B cell (primary cell): ENCODE measurements at regions of chr16 and their contacts with region 1.

Region 1: DNA sequence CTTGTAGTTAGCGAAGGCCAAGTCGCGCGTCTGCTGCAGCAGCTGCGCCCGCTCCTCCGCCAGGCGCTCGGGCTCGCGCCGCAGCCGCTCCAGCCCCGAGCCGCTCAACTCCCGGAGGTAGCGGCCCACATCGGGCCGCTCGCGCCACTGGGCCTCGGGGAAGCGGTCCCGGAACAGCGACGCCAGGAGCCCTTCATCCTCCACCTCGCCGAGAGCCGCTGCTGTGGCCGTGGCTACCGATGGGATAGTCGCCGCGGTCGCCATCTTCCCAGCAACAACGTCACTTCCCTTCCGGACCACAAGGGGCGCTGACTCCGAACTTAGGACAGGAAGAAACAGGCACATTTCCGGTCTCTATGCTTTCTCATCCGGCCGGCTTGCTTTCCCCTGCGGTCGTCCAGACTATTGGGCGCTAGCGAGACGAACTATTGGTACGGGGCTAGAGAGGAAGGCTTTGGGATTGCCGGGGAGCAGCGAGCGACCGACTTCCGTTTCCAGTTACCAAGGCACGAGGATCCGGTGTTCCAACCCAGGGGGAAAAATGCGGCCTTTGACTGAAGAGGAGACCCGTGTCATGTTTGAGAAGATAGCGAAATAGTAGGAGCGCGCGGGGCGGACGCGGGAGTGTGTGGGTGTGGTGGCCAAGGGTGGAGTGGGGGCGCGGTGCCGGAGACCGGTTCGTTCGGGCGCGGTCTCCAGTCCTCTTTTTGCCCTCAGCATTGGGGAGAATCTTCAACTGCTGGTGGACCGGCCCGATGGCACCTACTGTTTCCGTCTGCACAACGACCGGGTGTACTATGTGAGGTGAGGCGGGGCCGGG is at the starts of genes COG8 and NIP7:
- DNase-seq: peak; percentile 96
- ATAC-seq: peak; percentile 94
- H3K4me3 ChIP-seq: peak within 1 kb of the TSS; percentile 26 to 99 (median 68)
- H3K4me3 Mint-ChIP-seq: peak within 1 kb of the TSS; percentile 98
- H3K27ac ChIP-seq: peak within 1 kb of the TSS; percentile 65 to 87
- H3K27ac Mint-ChIP-seq: peak within 1 kb of the TSS; percentile 98
- H3K4me1 ChIP-seq: peaks cover 17 to 27% of the 10 kb centered on the region in 2 donors
- H3K4me1 Mint-ChIP-seq: peaks cover 45% of the 10 kb centered on the region
- H3K27me3 ChIP-seq: no peaks in the 10 kb centered on the region
- H3K27me3 Mint-ChIP-seq: no peaks in the 10 kb centered on the region
- CTCF ChIP-seq: peak; percentile 84
- total RNA-seq, gene COG8: 61.6 and 62.0 TPM in 2 replicates
- total RNA-seq, gene NIP7: 20.2 and 29.3 TPM in 2 replicates

Region 2: DNA sequence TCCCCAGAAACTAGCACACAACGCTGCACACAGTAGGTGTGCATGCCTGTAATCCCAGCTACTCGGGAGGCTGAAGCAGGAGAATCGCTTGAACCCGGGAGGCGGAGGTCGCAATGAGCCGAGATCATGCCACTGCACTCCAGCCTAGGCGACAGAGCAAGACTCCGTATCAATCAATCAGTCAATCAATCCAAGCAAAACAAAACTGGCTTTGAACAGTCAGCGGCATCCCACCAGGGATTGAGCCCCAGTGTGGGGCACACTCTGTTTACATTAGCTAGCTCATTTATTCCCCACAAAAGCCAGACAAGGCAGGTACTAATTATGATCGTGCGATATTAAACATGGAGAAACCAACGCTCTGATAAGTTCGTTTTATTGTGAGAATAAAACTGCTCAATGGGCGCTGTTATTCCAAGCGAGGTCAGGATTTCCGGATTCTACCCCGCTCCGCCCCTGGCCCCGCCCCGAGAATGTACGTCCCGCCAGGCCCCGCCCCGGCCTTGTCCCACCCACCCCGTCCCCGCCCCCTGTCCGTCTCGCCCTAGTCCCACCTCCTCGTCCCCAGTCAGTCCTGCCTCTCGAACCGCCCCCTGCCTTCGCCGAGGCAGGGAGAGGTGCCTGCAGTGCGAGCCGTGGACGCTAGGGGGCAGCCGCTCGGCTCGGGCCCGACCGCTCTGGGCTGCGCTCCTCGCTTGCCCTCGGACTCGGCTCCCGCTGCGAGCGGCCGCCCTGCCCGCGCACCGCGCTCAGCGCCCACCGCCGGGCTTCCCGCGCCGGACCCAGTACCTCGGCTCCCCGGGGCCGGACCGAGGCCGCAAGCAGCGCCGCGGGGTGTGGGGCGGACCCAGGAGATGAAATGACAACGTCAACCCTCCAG is 28.6 kb before region 1 on chr16 and contains the start of gene VPS4A:
- CTCF ChIA-PET with region 1: interaction called, 4 read pairs
- POLR2A ChIA-PET with region 1: no interaction called
- intact Hi-C with region 1: loop called (anchors 1 kb)
- DNase-seq: peak; percentile 97
- ATAC-seq: peak; percentile 98
- H3K4me3 ChIP-seq: peak within 1 kb of the TSS; percentile 62 to 89 (median 67)
- H3K4me3 Mint-ChIP-seq: peak within 1 kb of the TSS; percentile 99
- H3K27ac ChIP-seq: peak within 1 kb of the TSS; percentile 75 to 84
- H3K27ac Mint-ChIP-seq: peak within 1 kb of the TSS; percentile 94
- H3K4me1 ChIP-seq: peaks cover 10 to 23% of the 10 kb centered on the region in 2 donors
- H3K4me1 Mint-ChIP-seq: peaks cover 24% of the 10 kb centered on the region
- H3K27me3 ChIP-seq: no peaks in the 10 kb centered on the region
- H3K27me3 Mint-ChIP-seq: no peaks in the 10 kb centered on the region
- CTCF ChIP-seq: peak; percentile 86
- total RNA-seq, gene VPS4A: 41.4 and 43.8 TPM in 2 replicates

Region 3: GRCh38 chr16:69386596-69386995 is 47.1 kb after region 1 on chr16:
- CTCF ChIA-PET with region 1: interaction called, 6 read pairs
- POLR2A ChIA-PET with region 1: no interaction called
- intact Hi-C with region 1: loop called (anchors 1 kb)
- DNase-seq: no peak
- ATAC-seq: no peak
- H3K4me3 ChIP-seq: peak overlapping the region in 1 of 5 experiments; percentile 64
- H3K4me3 Mint-ChIP-seq: peak overlapping the region; percentile 57
- H3K27ac ChIP-seq: no peak overlapping the region
- H3K27ac Mint-ChIP-seq: no peak overlapping the region
- H3K4me1 ChIP-seq: peaks cover 31 to 33% of the 10 kb centered on the region in 2 donors
- H3K4me1 Mint-ChIP-seq: peaks cover 30% of the 10 kb centered on the region
- H3K27me3 ChIP-seq: no peaks in the 10 kb centered on the region
- H3K27me3 Mint-ChIP-seq: no peaks in the 10 kb centered on the region
- CTCF ChIP-seq: no peak

Region 4: DNA sequence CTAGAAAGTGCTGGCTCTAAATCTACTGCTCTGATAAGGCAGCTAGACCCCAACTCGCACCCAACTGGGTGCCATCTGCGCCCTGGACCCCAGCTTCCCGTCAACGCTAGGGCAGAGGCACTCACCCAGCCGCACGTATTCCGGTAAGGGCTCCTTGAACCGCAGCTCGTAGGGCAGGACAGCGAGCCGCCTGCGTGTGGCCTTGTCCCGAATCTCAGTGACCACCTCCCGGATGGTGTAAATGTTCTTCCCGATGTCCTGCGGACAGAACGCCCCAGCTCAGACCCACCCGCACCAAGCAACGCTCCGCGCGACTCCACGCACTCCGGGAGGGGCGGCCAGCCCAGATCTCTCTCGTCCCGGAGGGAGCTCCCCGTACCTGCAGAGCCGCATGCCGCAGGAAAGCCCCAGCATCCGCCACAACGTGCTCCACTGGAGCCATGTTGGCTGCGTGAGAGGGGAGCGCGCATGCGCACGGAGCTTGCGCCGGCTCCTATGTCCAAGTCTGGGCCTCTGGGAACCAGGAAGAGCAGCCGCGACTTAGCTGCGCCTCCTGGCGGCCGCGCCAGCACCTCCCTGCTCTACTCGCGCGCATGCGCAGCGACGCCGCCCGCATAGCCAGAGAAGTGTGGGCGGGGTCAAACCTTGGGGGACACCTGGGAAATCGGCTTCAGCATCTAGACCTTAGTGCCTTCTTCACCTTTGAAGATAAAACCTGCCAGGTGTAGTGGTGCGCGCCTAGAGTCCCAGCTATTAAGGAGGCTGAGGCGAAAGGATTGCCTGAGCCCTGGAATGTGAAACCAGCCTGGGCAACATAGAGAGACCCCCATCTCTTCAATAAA is 415.2 kb after region 1 on chr16 and contains the start of gene NOB1:
- CTCF ChIA-PET with region 1: no interaction called
- POLR2A ChIA-PET with region 1: no interaction called
- intact Hi-C with region 1: loop called (anchors 2 kb)
- DNase-seq: peak; percentile 99
- ATAC-seq: peak; percentile 96
- H3K4me3 ChIP-seq: peak within 1 kb of the TSS; percentile 73 to 100 (median 91)
- H3K4me3 Mint-ChIP-seq: peak within 1 kb of the TSS; percentile 99
- H3K27ac ChIP-seq: peak within 1 kb of the TSS; percentile 61 to 76
- H3K27ac Mint-ChIP-seq: peak within 1 kb of the TSS; percentile 94
- H3K4me1 ChIP-seq: peaks cover 8 to 20% of the 10 kb centered on the region in 2 donors
- H3K4me1 Mint-ChIP-seq: peaks cover 21% of the 10 kb centered on the region
- H3K27me3 ChIP-seq: no peaks in the 10 kb centered on the region
- H3K27me3 Mint-ChIP-seq: no peaks in the 10 kb centered on the region
- CTCF ChIP-seq: peak; percentile 92
- total RNA-seq, gene NOB1: 44.9 and 49.6 TPM in 2 replicates

Region 5: GRCh38 chr16:69761983-69762813 is 422.7 kb after region 1 on chr16 and contains the start of gene WWP2:
- CTCF ChIA-PET with region 1: no interaction called
- POLR2A ChIA-PET with region 1: no interaction called
- intact Hi-C with region 1: loop called (anchors 2 kb)
- DNase-seq: peak; percentile 92
- ATAC-seq: peak; percentile 82
- H3K4me3 ChIP-seq: peak within 1 kb of the TSS; percentile 87 to 95 (median 92)
- H3K4me3 Mint-ChIP-seq: peak within 1 kb of the TSS; percentile 90
- H3K27ac ChIP-seq: peak within 1 kb of the TSS; percentile 92 to 98
- H3K27ac Mint-ChIP-seq: peak within 1 kb of the TSS; percentile 97
- H3K4me1 ChIP-seq: peaks cover 14 to 23% of the 10 kb centered on the region in 2 donors
- H3K4me1 Mint-ChIP-seq: peaks cover 30% of the 10 kb centered on the region
- H3K27me3 ChIP-seq: no peaks in the 10 kb centered on the region
- H3K27me3 Mint-ChIP-seq: no peaks in the 10 kb centered on the region
- CTCF ChIP-seq: no peak
- total RNA-seq, gene WWP2: 100 and 105 TPM in 2 replicates

Region 6: DNA sequence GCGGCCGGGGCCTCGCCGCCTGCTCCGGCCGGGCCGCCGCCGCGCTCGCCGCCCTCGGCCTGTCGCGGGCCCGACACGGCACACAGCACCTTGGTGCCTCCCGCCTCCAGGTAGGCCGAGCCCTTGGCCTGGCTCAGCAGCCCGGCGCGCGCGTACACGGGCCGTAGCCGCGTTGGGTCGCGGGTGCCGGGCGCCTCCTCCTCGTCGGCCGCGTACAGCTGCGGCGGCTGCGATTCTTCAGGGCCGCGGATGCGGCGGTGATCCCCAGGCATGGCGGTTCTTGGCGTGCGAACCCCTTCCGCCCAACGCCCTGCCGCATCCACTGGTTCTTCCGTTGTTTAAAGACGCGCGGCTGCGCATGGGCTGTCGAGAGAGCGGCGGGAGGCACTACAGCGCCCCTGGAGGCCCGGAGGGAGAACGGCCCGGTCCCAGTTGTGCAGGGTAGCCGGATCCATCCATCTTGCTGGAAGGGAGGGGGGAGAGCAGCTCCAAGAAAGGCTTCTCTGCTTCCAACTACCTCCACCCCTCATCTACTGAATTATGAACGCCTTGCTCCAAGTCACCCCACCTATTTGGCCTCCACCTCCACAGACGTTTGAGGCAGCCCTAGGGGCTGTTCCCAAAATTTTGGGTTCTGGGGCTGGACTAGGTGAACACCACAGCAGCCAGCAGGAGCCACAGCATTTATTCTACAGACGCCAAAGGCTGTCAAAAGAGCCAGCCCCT is 912.3 kb after region 1 on chr16 and contains the start of gene EXOSC6:
- CTCF ChIA-PET with region 1: no interaction called
- POLR2A ChIA-PET with region 1: no interaction called
- intact Hi-C with region 1: loop called (anchors 2 kb)
- DNase-seq: peak; percentile 96
- ATAC-seq: peak; percentile 97
- H3K4me3 ChIP-seq: peak within 1 kb of the TSS; percentile 19 to 76 (median 65)
- H3K4me3 Mint-ChIP-seq: peak within 1 kb of the TSS; percentile 90
- H3K27ac ChIP-seq: peak within 1 kb of the TSS; percentile 38 to 78
- H3K27ac Mint-ChIP-seq: peak within 1 kb of the TSS; percentile 98
- H3K4me1 ChIP-seq: peaks cover 0 to 24% of the 10 kb centered on the region in 2 donors
- H3K4me1 Mint-ChIP-seq: peaks cover 14% of the 10 kb centered on the region
- H3K27me3 ChIP-seq: no peaks in the 10 kb centered on the region
- H3K27me3 Mint-ChIP-seq: no peaks in the 10 kb centered on the region
- CTCF ChIP-seq: peak; percentile 92
- total RNA-seq, gene EXOSC6: 41.8 and 42.3 TPM in 2 replicates